ENCODE measurements at regions of chr3 and their contacts with region 1.

Region 1: GRCh38 chr3:50171540-50172301 is 16.6 kb downstream of the SEMA3F start:
- DNase-seq: no peak
- ATAC-seq: peak in 3 of 8 donors; percentile 0 to 12 (median 7)
- H3K4me3 ChIP-seq: no peak overlapping the region
- H3K27ac ChIP-seq: peak overlapping the region in 9 of 10 donors; percentile 73 to 91 (median 82)
- H3K4me1 ChIP-seq: peaks cover 33 to 65% (median 56%) of the 10 kb centered on the region in 9 donors
- H3K27me3 ChIP-seq: no peaks in the 10 kb centered on the region
- CTCF ChIP-seq: no peak

Region 2: DNA sequence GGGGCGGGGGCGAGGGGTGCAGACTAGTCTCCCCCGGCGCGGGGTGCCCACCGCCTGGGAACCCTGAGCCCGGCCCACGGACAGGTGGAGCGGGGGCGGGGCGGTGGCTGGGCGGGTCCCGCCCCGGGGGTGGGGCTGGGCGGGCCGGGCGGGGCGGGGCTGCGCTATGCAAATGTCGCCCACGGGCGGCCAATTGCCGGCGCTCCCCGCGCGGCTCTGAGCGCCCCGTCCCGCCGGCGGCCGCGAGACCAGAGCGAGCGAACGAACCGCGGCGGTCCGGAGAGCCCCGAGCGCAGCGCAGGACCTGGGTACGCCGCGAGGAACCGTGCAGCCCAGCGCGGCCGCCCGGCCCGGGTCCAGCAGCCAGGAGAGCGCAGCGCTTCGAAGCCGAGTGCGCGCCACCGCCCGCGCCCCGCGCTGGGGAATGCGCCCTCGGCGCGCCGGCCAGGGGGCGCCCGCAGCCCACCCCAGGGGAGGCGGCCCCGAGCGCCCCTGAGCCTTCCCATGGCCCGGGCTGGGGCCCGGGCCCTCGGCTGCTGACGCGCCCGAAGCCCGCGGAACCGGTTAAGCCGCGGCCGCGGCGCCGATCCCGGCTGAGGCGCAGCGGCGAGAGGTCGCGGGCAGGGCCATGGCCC is 16.8 kb before region 1 on chr3 and contains the start of gene SEMA3F:
- intact Hi-C with region 1: loop called in 1 of 10 experiments (anchors 1 kb)
- DNase-seq: peak; percentile 39 to 70
- ATAC-seq: peak; percentile 67 to 88 (median 82)
- H3K4me3 ChIP-seq: peak within 1 kb of the TSS; percentile 19 to 67 (median 60)
- H3K27ac ChIP-seq: peak within 1 kb of the TSS; percentile 68 to 91 (median 84)
- H3K4me1 ChIP-seq: peaks cover 5 to 45% (median 28%) of the 10 kb centered on the region in 9 donors
- H3K27me3 ChIP-seq: peaks cover 0 to 41% (median 0%) of the 10 kb centered on the region in 7 donors
- CTCF ChIP-seq: peak in 6 of 9 donors; percentile 5 to 48 (median 43)
- total RNA-seq, gene SEMA3F: 5.1 to 37.2 (median 10.2) TPM